K562 (cell line): ENCODE measurements at regions of chr2 and their contacts with region 1.

Region 1: GRCh38 chr2:122300758-122301157 is 545.3 kb downstream of the TSN start:
- DNase-seq: peak in 2 of 4 experiments; percentile 11 to 34
- ATAC-seq: peak; percentile 72
- H3K4me3 ChIP-seq: no peak overlapping the region
- H3K27ac ChIP-seq: no peak overlapping the region
- H3K4me1 ChIP-seq: no peaks in the 10 kb centered on the region
- H3K27me3 ChIP-seq: no peaks in the 10 kb centered on the region
- CTCF ChIP-seq: peak; percentile 20 to 49 (median 36); a peak in 3 of 6 replicates
- EP300 ChIP-seq: no peak
- POLR2A ChIP-seq: no peak
- RAD21 ChIP-seq: peak in 1 of 2 experiments; percentile 49; a peak in 2 of 4 replicates

Region 2: GRCh38 chr2:121810959-121811853 is 489.6 kb before region 1 on chr2:
- CTCF ChIA-PET with region 1: no interaction called
- POLR2A ChIA-PET with region 1: no interaction called
- in situ Hi-C with region 1: no loop called
- intact Hi-C with region 1: loop called (anchors 5 kb)
- DNase-seq: peak; percentile 21 to 64 (median 34)
- ATAC-seq: peak; percentile 97
- H3K4me3 ChIP-seq: no peak overlapping the region
- H3K27ac ChIP-seq: no peak overlapping the region
- H3K4me1 ChIP-seq: no peaks in the 10 kb centered on the region; a peak in 1 of 5 replicates
- H3K27me3 ChIP-seq: peaks cover 11 to 41% of the 10 kb centered on the region in 2 experiments; a peak in 4 of 5 replicates
- CTCF ChIP-seq: peak; percentile 67 to 72 (median 70)
- EP300 ChIP-seq: no peak
- POLR2A ChIP-seq: no peak
- RAD21 ChIP-seq: peak; percentile 73 to 82

Region 3: DNA sequence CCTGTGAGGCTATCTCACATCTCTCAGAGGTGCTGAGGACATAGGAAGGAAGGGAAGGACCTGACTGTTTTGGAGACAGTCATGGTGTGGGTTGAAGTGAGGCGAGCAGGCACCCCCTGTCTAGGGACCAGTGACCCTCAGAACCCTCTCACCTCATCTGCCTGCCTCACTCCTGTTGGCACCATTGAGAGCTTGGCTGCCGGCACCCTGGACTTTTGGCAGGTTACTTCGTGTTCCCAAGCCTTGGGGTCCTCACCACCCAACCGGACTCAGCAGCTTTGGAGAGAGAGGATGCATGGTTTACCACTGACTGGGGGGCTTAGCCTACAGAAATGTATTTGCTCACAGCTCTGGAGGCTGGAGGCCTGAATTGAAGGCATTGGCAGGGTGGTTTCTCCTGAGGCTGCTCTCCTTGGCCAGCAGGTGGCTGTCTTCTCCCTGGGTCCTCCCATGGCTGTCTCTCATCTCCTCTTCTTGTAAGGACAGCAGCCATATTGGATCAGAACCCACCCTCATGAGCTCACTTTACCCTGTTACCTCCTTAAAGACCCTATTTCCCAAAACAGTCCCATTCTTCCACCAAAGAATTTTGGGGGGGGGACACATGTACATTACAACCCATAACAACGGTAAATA is 403.3 kb before region 1 on chr2:
- CTCF ChIA-PET with region 1: no interaction called
- POLR2A ChIA-PET with region 1: no interaction called
- in situ Hi-C with region 1: no loop called
- intact Hi-C with region 1: loop called (anchors 5 kb)
- DNase-seq: peak; percentile 63 to 69 (median 66)
- ATAC-seq: peak; percentile 89
- H3K4me3 ChIP-seq: no peak overlapping the region
- H3K27ac ChIP-seq: no peak overlapping the region
- H3K4me1 ChIP-seq: peaks cover 17% of the 10 kb centered on the region in 2 experiments; a peak in 4 of 5 replicates
- H3K27me3 ChIP-seq: peaks cover 0 to 8% of the 10 kb centered on the region in 2 experiments; a peak in 2 of 5 replicates
- CTCF ChIP-seq: peak; percentile 69 to 73 (median 71)
- EP300 ChIP-seq: no peak
- POLR2A ChIP-seq: no peak
- RAD21 ChIP-seq: peak; percentile 30 to 58; a peak in 3 of 4 replicates

Region 4: DNA sequence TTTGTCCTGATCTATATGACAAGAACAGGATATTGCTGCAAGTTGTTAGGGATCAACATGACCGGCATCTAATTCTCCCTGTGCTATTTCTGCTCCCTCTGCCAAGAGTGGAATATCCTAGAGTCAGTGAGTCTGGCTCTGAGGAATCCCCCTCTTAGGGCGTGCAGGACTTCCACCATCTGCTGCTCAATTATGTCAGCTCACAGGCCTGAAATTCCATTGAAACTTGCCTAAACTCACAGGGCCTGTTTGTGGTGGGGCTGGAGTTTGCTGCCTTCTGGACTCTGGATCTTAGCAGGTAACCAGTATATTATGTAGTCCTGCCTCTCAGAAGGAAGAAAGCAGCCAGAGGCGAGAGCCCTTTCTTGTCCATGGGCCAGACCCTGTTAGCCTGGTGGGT is 222.3 kb before region 1 on chr2:
- CTCF ChIA-PET with region 1: no interaction called
- POLR2A ChIA-PET with region 1: no interaction called
- in situ Hi-C with region 1: no loop called
- intact Hi-C with region 1: no loop called
- DNase-seq: no peak
- ATAC-seq: no peak
- H3K4me3 ChIP-seq: no peak overlapping the region
- H3K27ac ChIP-seq: no peak overlapping the region
- H3K4me1 ChIP-seq: no peaks in the 10 kb centered on the region
- H3K27me3 ChIP-seq: peaks cover 3 to 6% of the 10 kb centered on the region in 2 experiments; a peak in 3 of 5 replicates
- CTCF ChIP-seq: no peak
- EP300 ChIP-seq: no peak
- POLR2A ChIP-seq: no peak
- RAD21 ChIP-seq: no peak

Region 5: DNA sequence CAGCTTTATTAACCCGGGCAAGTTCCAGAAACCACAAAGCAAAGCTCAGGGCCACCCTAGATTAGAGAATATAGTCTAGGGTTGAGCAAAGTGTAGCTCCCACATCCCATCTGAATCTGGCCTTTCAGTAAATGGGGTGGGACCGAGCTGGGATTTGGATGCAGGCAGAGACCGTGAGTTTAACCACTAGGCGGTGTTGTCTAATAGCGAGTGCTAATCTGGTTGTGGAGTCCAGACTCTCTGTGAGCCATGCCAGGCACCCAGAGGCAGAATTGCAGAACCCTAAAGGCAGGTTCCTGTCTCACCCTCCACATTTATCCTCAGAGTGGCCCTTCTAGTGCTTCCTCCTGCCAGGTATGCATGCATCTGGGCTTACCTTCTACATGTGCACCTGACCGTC is 109.4 kb before region 1 on chr2:
- CTCF ChIA-PET with region 1: no interaction called
- POLR2A ChIA-PET with region 1: no interaction called
- in situ Hi-C with region 1: no loop called
- intact Hi-C with region 1: loop called (anchors 5 kb)
- DNase-seq: peak; percentile 44 to 51 (median 50)
- ATAC-seq: peak; percentile 89
- H3K4me3 ChIP-seq: no peak overlapping the region
- H3K27ac ChIP-seq: no peak overlapping the region
- H3K4me1 ChIP-seq: peaks cover 6 to 20% of the 10 kb centered on the region in 2 experiments; a peak in 3 of 5 replicates
- H3K27me3 ChIP-seq: peaks cover 0 to 14% of the 10 kb centered on the region in 2 experiments; a peak in 3 of 5 replicates
- CTCF ChIP-seq: peak; percentile 45 to 71 (median 60); a peak in 5 of 6 replicates
- EP300 ChIP-seq: no peak
- POLR2A ChIP-seq: no peak
- RAD21 ChIP-seq: peak; percentile 49 to 65

Region 6: GRCh38 chr2:122570641-122571040 is 269.9 kb after region 1 on chr2:
- CTCF ChIA-PET with region 1: no interaction called
- POLR2A ChIA-PET with region 1: no interaction called
- in situ Hi-C with region 1: no loop called
- intact Hi-C with region 1: no loop called
- DNase-seq: no peak
- ATAC-seq: no peak
- H3K4me3 ChIP-seq: no peak overlapping the region
- H3K27ac ChIP-seq: no peak overlapping the region
- H3K4me1 ChIP-seq: no peaks in the 10 kb centered on the region
- H3K27me3 ChIP-seq: no peaks in the 10 kb centered on the region
- CTCF ChIP-seq: no peak
- EP300 ChIP-seq: no peak
- POLR2A ChIP-seq: no peak
- RAD21 ChIP-seq: no peak